Spleen (tissue), 13 donors: ENCODE measurements at regions of chr12 and their contacts with region 1.

Region 1: GRCh38 chr12:14846042-14846587 is 2.8 kb upstream of the ART4 start:
- DNase-seq: no peak
- H3K4me3 ChIP-seq: no peak overlapping the region
- H3K27ac ChIP-seq: peak overlapping the region; percentile 3 to 53 (median 36)
- H3K4me1 ChIP-seq: peaks cover 5 to 48% (median 17%) of the 10 kb centered on the region in 6 donors
- H3K27me3 ChIP-seq: no peaks in the 10 kb centered on the region
- CTCF ChIP-seq: no peak
- POLR2A ChIP-seq: no peak

Region 2: GRCh38 chr12:14795028-14795448 is 51.1 kb before region 1 on chr12:
- intact Hi-C with region 1: no loop called
- DNase-seq: no peak
- H3K4me3 ChIP-seq: no peak overlapping the region
- H3K27ac ChIP-seq: peak overlapping the region in 1 of 8 donors; percentile 13
- H3K4me1 ChIP-seq: peaks cover 0 to 3% (median 0%) of the 10 kb centered on the region in 6 donors
- H3K27me3 ChIP-seq: no peaks in the 10 kb centered on the region
- CTCF ChIP-seq: no peak
- POLR2A ChIP-seq: no peak

Region 3: GRCh38 chr12:14984766-14985285 is 138.7 kb after region 1 on chr12:
- intact Hi-C with region 1: no loop called
- DNase-seq: no peak
- H3K4me3 ChIP-seq: no peak overlapping the region
- H3K27ac ChIP-seq: peak overlapping the region in 2 of 8 donors; percentile 81 to 85
- H3K4me1 ChIP-seq: peaks cover 3 to 78% (median 31%) of the 10 kb centered on the region in 6 donors
- H3K27me3 ChIP-seq: no peaks in the 10 kb centered on the region
- CTCF ChIP-seq: no peak
- POLR2A ChIP-seq: no peak

Region 4: GRCh38 chr12:14995583-14996425 is 149.7 kb after region 1 on chr12:
- intact Hi-C with region 1: loop called (anchors 2 kb)
- DNase-seq: no peak
- H3K4me3 ChIP-seq: no peak overlapping the region
- H3K27ac ChIP-seq: no peak overlapping the region
- H3K4me1 ChIP-seq: peaks cover 0 to 33% (median 8%) of the 10 kb centered on the region in 6 donors
- H3K27me3 ChIP-seq: no peaks in the 10 kb centered on the region
- CTCF ChIP-seq: peak; percentile 51 to 90 (median 77)
- POLR2A ChIP-seq: no peak